GM12878 (cell line): ENCODE measurements at regions of chr12 and their contacts with region 1.

Region 1: GRCh38 chr12:3885277-3886094 is 12.3 kb upstream of the PARP11 start:
- DNase-seq: no peak
- ATAC-seq: peak; percentile 36; the same call in 2 of the 3 replicates
- H3K4me3 ChIP-seq: 0 out of 2 replicates have a peak overlapping the region, but pooled peaks have one; percentile 5
- H3K27ac ChIP-seq: no peak overlapping the region
- H3K4me1 ChIP-seq: no peaks in the 10 kb centered on the region
- H3K27me3 ChIP-seq: no peaks in the 10 kb centered on the region; a peak in 1 of 4 replicates
- CTCF ChIP-seq: peak; percentile 74 to 82 (median 80)
- EP300 ChIP-seq: no peak
- POLR2A ChIP-seq: no peak
- RAD21 ChIP-seq: peak; percentile 91

Region 2: DNA sequence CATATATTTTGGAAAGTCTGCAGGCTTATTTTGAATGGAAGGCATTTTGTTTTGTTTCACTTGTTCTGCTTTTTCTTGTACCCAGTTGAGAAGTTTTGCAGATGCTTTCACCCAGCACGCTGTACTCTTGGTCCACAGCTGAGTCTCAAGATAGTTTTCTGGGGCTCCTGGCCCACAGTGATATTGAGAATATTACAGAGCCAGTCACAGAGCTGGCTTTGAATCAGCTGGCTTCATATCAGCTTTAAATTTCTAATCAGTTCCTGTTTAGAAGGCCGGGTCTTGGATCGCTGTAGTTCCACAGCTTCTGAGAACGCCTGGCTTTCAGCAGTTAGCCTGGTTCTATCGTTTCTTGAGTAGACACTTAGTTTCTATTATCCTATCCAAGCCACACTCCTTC is 20.2 kb after region 1 on chr12:
- CTCF ChIA-PET with region 1: interaction called, 16 read pairs
- POLR2A ChIA-PET with region 1: interaction called, 3 read pairs
- RAD21 ChIA-PET with region 1: no interaction called
- SMC1A ChIA-PET with region 1: interaction called, 4 read pairs
- in situ Hi-C with region 1: no loop called
- intact Hi-C with region 1: no loop called
- DNase-seq: no peak
- ATAC-seq: no peak
- H3K4me3 ChIP-seq: no peak overlapping the region
- H3K27ac ChIP-seq: no peak overlapping the region
- H3K4me1 ChIP-seq: no peaks in the 10 kb centered on the region
- H3K27me3 ChIP-seq: no peaks in the 10 kb centered on the region
- CTCF ChIP-seq: no peak
- EP300 ChIP-seq: no peak
- POLR2A ChIP-seq: no peak
- RAD21 ChIP-seq: no peak

Region 3: GRCh38 chr12:3988519-3989448 is 103.3 kb after region 1 on chr12:
- CTCF ChIA-PET with region 1: interaction called, 61 read pairs
- POLR2A ChIA-PET with region 1: no interaction called
- RAD21 ChIA-PET with region 1: interaction called, 4 read pairs
- SMC1A ChIA-PET with region 1: interaction called, 4 read pairs
- in situ Hi-C with region 1: no loop called
- intact Hi-C with region 1: no loop called
- DNase-seq: peak; percentile 36
- ATAC-seq: peak; percentile 81
- H3K4me3 ChIP-seq: no peak overlapping the region
- H3K27ac ChIP-seq: no peak overlapping the region
- H3K4me1 ChIP-seq: peaks cover 8% of the 10 kb centered on the region
- H3K27me3 ChIP-seq: no peaks in the 10 kb centered on the region; a peak in 1 of 4 replicates
- CTCF ChIP-seq: no peak
- EP300 ChIP-seq: no peak
- POLR2A ChIP-seq: no peak
- RAD21 ChIP-seq: no peak

Region 4: DNA sequence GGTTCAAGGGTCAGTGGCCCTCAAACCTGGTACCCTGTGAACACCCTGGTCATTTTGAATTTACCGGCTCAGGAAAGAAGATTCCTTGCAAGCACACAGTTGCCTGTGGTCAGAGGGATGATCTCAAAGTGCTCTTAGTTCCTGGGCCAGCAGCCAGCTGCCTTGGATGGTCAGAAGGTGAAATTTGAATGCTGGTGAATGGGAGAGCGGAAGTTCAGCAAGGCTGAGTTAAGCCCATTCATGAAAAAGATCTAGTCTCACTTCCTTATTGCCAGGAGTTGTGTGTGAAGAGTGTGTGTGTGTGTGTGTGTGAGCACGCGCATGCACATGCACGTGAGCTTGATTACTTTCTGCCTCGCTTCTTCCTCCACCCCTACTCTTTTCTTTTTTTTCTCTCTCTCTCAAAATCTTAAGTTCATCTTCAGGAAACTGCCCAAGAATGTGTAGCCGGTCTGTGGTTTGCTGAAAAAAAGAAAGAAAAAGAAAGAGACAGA is 232.6 kb after region 1 on chr12:
- CTCF ChIA-PET with region 1: no interaction called
- POLR2A ChIA-PET with region 1: no interaction called
- RAD21 ChIA-PET with region 1: interaction called, 3 read pairs
- SMC1A ChIA-PET with region 1: no interaction called
- in situ Hi-C with region 1: no loop called
- intact Hi-C with region 1: loop called (anchors 10 kb)
- DNase-seq: peak; percentile 89
- ATAC-seq: peak; percentile 54
- H3K4me3 ChIP-seq: peak overlapping the region; percentile 56
- H3K27ac ChIP-seq: peak overlapping the region; percentile 95
- H3K4me1 ChIP-seq: peaks cover 50% of the 10 kb centered on the region
- H3K27me3 ChIP-seq: no peaks in the 10 kb centered on the region
- CTCF ChIP-seq: no peak
- EP300 ChIP-seq: peak; percentile 83 to 94; a peak in 3 of 4 replicates
- POLR2A ChIP-seq: no peak
- RAD21 ChIP-seq: no peak

Region 5: GRCh38 chr12:4356041-4356327 is 470.5 kb after region 1 on chr12:
- CTCF ChIA-PET with region 1: no interaction called
- POLR2A ChIA-PET with region 1: no interaction called
- RAD21 ChIA-PET with region 1: no interaction called
- SMC1A ChIA-PET with region 1: no interaction called
- in situ Hi-C with region 1: no loop called
- intact Hi-C with region 1: loop called (anchors 10 kb)
- DNase-seq: no peak
- ATAC-seq: peak; percentile 86
- H3K4me3 ChIP-seq: no peak overlapping the region
- H3K27ac ChIP-seq: no peak overlapping the region
- H3K4me1 ChIP-seq: no peaks in the 10 kb centered on the region
- H3K27me3 ChIP-seq: no peaks in the 10 kb centered on the region
- CTCF ChIP-seq: peak; percentile 43 to 70 (median 64)
- EP300 ChIP-seq: no peak
- POLR2A ChIP-seq: no peak
- RAD21 ChIP-seq: peak; percentile 57

Region 6: DNA sequence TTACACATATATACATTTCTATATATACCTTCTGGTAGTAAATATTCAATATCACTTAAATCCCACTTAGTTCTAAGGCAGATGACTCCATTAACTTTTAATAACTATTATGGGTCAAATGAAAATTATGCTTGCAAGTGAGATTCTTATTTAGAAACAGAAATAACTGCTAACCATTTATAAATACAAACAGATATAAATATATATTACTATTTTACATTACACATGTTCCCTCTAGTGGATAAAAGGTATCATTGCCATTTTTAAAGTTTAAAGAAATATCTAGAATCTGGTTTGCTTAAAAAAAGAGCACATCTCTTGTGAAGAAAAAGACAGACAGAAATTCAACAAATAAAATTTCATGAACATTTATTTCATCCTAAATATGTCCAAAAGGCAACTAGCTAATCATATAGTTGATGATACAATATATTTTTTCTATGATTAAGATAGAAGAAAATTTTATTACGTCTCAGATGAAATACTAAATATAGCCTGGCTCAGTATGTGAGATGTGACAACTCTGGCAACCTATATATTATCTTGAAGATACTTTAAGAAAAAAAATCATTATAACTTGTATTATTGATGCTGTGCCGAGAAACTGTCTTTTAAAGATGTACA is 641.5 kb after region 1 on chr12:
- CTCF ChIA-PET with region 1: interaction called, 36 read pairs
- POLR2A ChIA-PET with region 1: no interaction called
- RAD21 ChIA-PET with region 1: interaction called, 4 read pairs
- SMC1A ChIA-PET with region 1: interaction called, 7 read pairs
- in situ Hi-C with region 1: no loop called
- intact Hi-C with region 1: loop called (anchors 2 kb)
- DNase-seq: no peak
- ATAC-seq: no peak
- H3K4me3 ChIP-seq: no peak overlapping the region
- H3K27ac ChIP-seq: no peak overlapping the region
- H3K4me1 ChIP-seq: no peaks in the 10 kb centered on the region
- H3K27me3 ChIP-seq: no peaks in the 10 kb centered on the region
- CTCF ChIP-seq: peak in 2 of 3 experiments; percentile 14 to 31; a peak in 3 of 6 replicates
- EP300 ChIP-seq: no peak
- POLR2A ChIP-seq: no peak
- RAD21 ChIP-seq: peak; percentile 42